G401 (cell line): ENCODE measurements at regions of chr15 and their contacts with region 1.

Region 1: GRCh38 chr15:98658831-98659699 is 10.7 kb downstream of the IGF1R start:
- DNase-seq: peak; percentile 80

Region 2: GRCh38 chr15:98455965-98456364 is 203.1 kb before region 1 on chr15:
- in situ Hi-C with region 1: loop called (anchors 25 kb)
- DNase-seq: no peak